Left cardiac atrium (tissue), 4 donors: ENCODE measurements at regions of chr6 and their contacts with region 1.

Region 1: DNA sequence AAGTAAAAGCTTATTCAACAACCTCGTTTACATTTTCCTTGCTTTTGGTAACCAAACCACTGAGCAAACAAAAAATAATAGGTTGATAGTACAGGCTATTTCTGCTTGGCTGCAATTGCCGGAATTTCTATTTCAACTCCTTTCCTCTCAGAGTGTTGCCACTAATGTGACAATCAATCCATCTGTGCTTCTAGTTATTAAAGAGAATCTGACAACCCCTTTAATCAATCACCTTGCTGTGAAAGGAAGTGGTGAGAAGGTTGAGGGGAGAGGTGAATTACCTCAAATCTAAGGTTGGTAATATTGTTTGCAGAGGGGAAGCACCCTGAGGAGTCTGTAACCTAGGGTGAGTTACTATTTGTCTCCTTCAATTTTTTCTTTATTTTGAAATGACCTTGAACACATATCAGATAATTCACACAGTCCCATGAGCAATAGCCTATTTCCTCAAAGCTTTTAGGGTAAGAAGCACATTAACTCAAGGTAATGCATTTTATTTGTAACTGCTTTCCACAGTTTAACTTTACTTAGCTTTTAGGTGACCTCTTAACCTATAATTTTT is 603.4 kb downstream of the MMUT start:
- DNase-seq: no peak
- ATAC-seq: no peak

Region 2: GRCh38 chr6:49025273-49026240 is 165.9 kb after region 1 on chr6:
- intact Hi-C with region 1: loop called in 1 of 2 experiments (anchors 5 kb)
- DNase-seq: no peak
- ATAC-seq: no peak